PC-3 (cell line): ENCODE measurements at regions of chr17 and their contacts with region 1.

Region 1: GRCh38 chr17:8189711-8190477 is at the start of gene BORCS6:
- DNase-seq: peak; percentile 93
- ATAC-seq: peak; percentile 60
- H3K4me3 ChIP-seq: peak within 1 kb of the TSS; percentile 84
- H3K27ac ChIP-seq: peak within 1 kb of the TSS; percentile 58; the same call in 1 of the 2 replicates
- H3K4me1 ChIP-seq: peaks cover 19% of the 10 kb centered on the region
- H3K27me3 ChIP-seq: no peaks in the 10 kb centered on the region
- CTCF ChIP-seq: peak; percentile 17; the same call in 1 of the 2 replicates
- total RNA-seq, gene BORCS6: 5.9 and 7.3 TPM in 2 replicates

Region 2: DNA sequence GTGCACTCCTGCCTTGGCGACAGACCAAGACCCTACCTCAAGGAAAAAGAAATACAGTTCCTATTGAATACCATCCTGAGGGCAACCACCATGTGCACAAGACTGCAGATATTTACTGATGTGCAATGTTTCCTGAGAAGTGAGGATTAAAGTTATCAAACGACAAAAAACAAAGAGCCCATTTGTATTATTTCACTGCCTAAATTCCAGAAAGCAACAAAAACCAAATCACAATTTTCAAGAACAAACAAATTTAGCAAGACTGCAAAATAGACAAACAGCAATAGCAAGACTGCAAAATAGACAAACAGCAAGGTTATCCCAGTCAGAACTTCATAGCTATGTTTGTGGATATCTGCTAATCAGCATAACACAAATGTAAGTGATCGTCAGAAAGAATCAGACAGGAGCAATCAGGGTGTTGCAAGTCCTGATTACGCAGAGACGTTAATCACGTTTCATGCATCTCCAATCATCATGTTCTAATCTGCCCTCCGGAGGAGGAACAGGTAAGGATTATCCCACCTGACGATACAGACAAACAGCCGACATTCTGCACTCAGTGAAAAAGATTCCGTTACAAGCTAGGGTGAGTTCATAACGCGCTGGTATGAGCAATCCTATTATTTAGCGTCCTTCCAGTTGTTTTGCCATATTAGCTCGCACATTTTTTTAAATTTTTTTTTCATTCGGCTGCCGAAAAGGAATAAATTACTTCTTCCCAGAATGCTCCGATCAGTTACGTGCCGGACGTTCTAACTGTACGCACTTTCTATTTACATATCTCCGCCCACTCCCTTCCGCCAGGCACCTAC is 16.6 kb before region 1 on chr17:
- CTCF ChIA-PET with region 1: interaction called, 3 read pairs
- POLR2A ChIA-PET with region 1: interaction called, 13 read pairs
- intact Hi-C with region 1: no loop called
- DNase-seq: peak; percentile 95
- ATAC-seq: peak; percentile 76
- H3K4me3 ChIP-seq: peak overlapping the region; percentile 65
- H3K27ac ChIP-seq: peak overlapping the region; percentile 94
- H3K4me1 ChIP-seq: peaks cover 18% of the 10 kb centered on the region
- H3K27me3 ChIP-seq: no peaks in the 10 kb centered on the region
- CTCF ChIP-seq: no peak

Region 3: DNA sequence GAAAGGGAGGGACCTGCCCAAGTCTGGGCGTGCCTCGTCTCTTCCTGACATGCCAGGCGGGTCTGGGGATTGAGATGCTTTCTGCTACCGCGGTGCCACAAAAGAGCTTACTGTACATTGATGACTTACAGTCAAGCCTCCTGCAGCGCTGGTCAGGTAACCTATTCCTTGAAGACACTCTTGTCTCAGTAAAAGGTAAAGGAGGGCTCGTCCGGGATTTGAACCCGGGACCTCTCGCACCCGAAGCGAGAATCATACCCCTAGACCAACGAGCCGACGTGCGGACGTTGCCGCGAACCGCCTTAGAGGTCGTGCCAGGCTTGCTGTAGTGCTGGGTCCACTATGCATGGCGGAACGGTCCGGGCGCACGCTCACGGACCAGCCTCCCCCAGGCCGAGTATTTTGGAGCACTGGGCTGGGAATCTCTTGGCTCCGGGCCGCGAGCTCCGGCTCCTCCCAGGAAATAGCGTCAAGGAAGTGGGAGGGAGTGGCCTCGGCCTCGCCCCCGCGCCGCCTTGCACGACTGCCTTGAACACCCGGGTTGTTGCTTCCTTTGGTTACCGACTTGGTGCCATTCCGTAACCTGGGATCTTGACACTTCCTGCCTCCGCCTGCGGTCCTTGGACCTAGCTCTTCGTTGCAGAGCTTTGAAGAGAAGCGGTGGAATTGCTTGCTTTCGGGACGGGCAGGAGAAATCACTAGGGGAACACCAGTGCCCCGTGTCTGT is 32.9 kb after region 1 on chr17:
- CTCF ChIA-PET with region 1: no interaction called
- POLR2A ChIA-PET with region 1: interaction called, 4 read pairs
- intact Hi-C with region 1: loop called (anchors 1 kb)
- DNase-seq: peak; percentile 88
- ATAC-seq: peak; percentile 44
- H3K4me3 ChIP-seq: peak overlapping the region; percentile 82
- H3K27ac ChIP-seq: peak overlapping the region; percentile 91
- H3K4me1 ChIP-seq: peaks cover 10% of the 10 kb centered on the region
- H3K27me3 ChIP-seq: no peaks in the 10 kb centered on the region
- CTCF ChIP-seq: no peak